ENCODE measurements at regions of chr3 and their contacts with region 1.

Region 1: DNA sequence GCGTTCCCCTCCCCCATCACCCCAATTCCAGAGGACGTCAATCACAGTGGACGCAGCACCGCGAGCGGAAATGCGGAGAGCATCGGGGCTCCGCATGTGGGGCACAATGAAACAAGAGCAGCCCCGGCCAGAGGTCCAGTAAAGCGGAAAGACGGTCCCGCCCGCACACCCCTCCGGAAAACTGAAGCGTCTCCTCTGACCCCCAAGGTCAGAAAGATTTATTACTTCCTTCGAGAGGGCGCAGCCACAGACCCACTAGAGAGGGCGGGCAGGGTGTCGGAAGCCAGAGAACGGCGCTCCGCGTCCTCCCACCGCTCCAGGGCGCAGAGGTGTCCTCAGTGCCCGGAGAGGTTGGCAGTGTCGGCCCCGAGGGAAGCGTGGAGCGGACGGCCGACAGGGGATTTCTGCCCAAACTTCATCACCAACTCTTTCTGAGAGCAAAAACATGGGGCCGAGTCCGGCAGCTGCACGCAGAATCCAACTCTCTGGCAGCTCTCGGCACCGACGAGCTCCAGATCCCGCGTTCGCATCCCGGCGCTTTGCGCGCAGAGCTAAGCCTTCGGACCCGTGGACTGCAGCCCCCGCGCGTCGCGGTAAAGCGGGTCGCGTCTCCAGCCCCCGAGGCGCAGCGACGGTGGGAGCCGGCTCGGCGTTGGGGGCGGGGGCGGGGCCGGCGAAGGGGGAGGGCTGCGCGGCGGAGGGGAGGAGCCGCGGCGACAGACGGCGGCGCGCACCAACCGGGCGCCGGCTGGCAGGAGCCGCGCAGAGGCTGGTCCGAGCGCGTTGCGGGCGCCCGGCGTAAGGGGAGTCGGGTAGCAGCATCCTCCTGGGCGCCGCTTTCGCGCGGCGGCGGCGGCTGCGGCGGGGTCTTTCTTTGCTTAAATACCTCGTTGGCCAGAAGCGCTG is at the start of gene CHST2:
- DNase-seq: peak; percentile 76
- ATAC-seq: peak; percentile 84
- H3K4me3 Mint-ChIP-seq: peak within 1 kb of the TSS; percentile 87
- H3K27ac Mint-ChIP-seq: peak within 1 kb of the TSS; percentile 68
- H3K4me1 Mint-ChIP-seq: peaks cover 29% of the 10 kb centered on the region
- H3K27me3 Mint-ChIP-seq: peaks cover 5% of the 10 kb centered on the region
- CTCF ChIP-seq: no peak
- total RNA-seq, gene CHST2: 6.0 to 6.9 TPM

Region 2: DNA sequence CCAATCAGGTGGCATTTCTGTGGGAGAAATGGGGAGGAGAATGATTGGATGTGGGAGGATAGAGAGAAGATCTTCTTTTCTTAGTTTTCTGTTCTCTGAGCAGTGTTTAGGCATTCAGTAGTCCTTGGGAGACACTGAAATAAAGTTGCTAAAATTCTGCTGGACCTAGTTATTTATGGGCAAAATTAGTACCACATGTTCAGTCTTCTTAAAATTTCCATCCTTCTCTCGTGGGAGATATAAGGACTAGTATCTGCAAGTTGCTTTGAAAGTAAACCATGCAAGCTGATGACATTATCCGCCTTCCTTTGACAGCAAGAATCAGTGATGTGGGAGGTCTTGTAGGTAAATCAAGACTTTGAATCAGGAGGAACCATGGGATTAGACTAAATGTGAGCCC is 19.6 kb before region 1 on chr3:
- CTCF ChIA-PET with region 1: no interaction called
- POLR2A ChIA-PET with region 1: no interaction called
- intact Hi-C with region 1: no loop called
- DNase-seq: no peak
- ATAC-seq: no peak
- H3K4me3 Mint-ChIP-seq: no peak overlapping the region
- H3K27ac Mint-ChIP-seq: no peak overlapping the region
- H3K4me1 Mint-ChIP-seq: peaks cover 3% of the 10 kb centered on the region
- H3K27me3 Mint-ChIP-seq: peaks cover 4% of the 10 kb centered on the region
- CTCF ChIP-seq: no peak

Region 3: GRCh38 chr3:143146486-143147274 is 27.4 kb after region 1 on chr3:
- CTCF ChIA-PET with region 1: no interaction called
- POLR2A ChIA-PET with region 1: no interaction called
- intact Hi-C with region 1: no loop called
- DNase-seq: no peak
- ATAC-seq: no peak
- H3K4me3 Mint-ChIP-seq: no peak overlapping the region
- H3K27ac Mint-ChIP-seq: no peak overlapping the region
- H3K4me1 Mint-ChIP-seq: peaks cover 2% of the 10 kb centered on the region
- H3K27me3 Mint-ChIP-seq: no peaks in the 10 kb centered on the region
- CTCF ChIP-seq: no peak

Region 4: DNA sequence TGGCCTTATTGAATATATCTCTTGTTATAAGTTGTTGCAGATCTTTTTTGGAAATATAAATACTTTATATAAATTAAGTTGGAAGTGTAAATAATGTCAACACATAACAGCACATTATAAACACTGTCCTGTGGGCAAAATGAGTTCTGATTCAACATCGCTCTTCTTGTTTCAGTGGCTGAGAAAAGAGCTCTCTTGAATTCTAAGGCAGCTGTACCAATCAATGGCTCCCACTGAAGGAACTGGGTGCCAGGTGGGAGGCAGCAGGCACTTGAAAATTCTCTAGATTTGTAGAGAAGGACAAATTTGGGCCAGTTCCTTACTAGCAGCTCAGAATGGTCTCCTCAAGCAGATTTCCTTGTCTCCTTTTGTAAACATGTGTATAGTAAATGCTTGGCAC is 45.9 kb after region 1 on chr3:
- CTCF ChIA-PET with region 1: interaction called, 13 read pairs
- POLR2A ChIA-PET with region 1: interaction called, 5 read pairs
- intact Hi-C with region 1: loop called (anchors 5 kb)
- DNase-seq: no peak
- ATAC-seq: peak; percentile 30
- H3K4me3 Mint-ChIP-seq: peak overlapping the region; percentile 37
- H3K27ac Mint-ChIP-seq: peak overlapping the region; percentile 94
- H3K4me1 Mint-ChIP-seq: peaks cover 71% of the 10 kb centered on the region
- H3K27me3 Mint-ChIP-seq: no peaks in the 10 kb centered on the region
- CTCF ChIP-seq: no peak

Region 5: GRCh38 chr3:143236226-143236964 is 117.1 kb after region 1 on chr3:
- CTCF ChIA-PET with region 1: no interaction called
- POLR2A ChIA-PET with region 1: no interaction called
- intact Hi-C with region 1: no loop called
- DNase-seq: no peak
- ATAC-seq: no peak
- H3K4me3 Mint-ChIP-seq: no peak overlapping the region
- H3K27ac Mint-ChIP-seq: no peak overlapping the region
- H3K4me1 Mint-ChIP-seq: peaks cover 8% of the 10 kb centered on the region
- H3K27me3 Mint-ChIP-seq: no peaks in the 10 kb centered on the region
- CTCF ChIP-seq: no peak

Region 6: DNA sequence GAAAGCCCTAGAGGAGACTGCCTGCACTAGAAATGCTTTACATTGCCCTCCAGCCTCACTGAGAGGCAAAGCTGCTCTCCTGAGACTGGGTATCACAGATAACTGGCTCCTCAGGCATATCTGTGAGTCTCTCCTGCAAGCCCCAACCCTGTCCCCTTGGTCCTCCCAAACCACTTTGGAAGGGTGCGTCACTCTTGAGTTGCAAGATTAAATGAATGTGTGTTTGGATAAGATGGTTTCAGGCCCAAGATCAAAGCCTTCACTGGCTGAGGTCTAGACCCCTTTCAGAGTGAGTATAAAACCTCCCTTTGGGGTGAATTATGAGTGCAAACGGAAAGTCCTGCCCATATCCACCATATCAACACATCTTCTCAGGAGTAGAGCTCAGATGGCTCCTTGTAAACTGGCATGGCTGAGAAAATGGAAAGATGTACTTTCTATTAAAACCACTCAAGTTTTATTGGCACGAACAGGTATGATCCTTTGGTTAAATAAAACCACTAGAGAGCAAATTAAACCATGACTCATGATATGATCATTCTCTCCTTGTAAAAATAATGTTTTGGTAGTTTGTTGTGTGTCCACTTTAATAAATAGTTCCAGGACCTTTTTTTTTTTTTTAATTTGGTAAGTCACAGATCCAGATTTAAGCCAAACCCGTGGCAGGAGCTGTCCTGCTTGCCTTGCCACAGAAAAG is 164.3 kb after region 1 on chr3:
- CTCF ChIA-PET with region 1: interaction called, 8 read pairs
- POLR2A ChIA-PET with region 1: no interaction called
- intact Hi-C with region 1: loop called (anchors 10 kb)
- DNase-seq: peak; percentile 34
- ATAC-seq: peak; percentile 69
- H3K4me3 Mint-ChIP-seq: no peak overlapping the region
- H3K27ac Mint-ChIP-seq: peak overlapping the region; percentile 7
- H3K4me1 Mint-ChIP-seq: peaks cover 43% of the 10 kb centered on the region
- H3K27me3 Mint-ChIP-seq: no peaks in the 10 kb centered on the region
- CTCF ChIP-seq: no peak

Region 7: GRCh38 chr3:143443851-143444331 is 324.6 kb after region 1 on chr3:
- CTCF ChIA-PET with region 1: interaction called, 7 read pairs
- POLR2A ChIA-PET with region 1: no interaction called
- intact Hi-C with region 1: loop called (anchors 10 kb)
- DNase-seq: peak; percentile 59
- ATAC-seq: peak; percentile 57
- H3K4me3 Mint-ChIP-seq: no peak overlapping the region
- H3K27ac Mint-ChIP-seq: no peak overlapping the region
- H3K4me1 Mint-ChIP-seq: peaks cover 31% of the 10 kb centered on the region
- H3K27me3 Mint-ChIP-seq: no peaks in the 10 kb centered on the region
- CTCF ChIP-seq: no peak

Region 8: DNA sequence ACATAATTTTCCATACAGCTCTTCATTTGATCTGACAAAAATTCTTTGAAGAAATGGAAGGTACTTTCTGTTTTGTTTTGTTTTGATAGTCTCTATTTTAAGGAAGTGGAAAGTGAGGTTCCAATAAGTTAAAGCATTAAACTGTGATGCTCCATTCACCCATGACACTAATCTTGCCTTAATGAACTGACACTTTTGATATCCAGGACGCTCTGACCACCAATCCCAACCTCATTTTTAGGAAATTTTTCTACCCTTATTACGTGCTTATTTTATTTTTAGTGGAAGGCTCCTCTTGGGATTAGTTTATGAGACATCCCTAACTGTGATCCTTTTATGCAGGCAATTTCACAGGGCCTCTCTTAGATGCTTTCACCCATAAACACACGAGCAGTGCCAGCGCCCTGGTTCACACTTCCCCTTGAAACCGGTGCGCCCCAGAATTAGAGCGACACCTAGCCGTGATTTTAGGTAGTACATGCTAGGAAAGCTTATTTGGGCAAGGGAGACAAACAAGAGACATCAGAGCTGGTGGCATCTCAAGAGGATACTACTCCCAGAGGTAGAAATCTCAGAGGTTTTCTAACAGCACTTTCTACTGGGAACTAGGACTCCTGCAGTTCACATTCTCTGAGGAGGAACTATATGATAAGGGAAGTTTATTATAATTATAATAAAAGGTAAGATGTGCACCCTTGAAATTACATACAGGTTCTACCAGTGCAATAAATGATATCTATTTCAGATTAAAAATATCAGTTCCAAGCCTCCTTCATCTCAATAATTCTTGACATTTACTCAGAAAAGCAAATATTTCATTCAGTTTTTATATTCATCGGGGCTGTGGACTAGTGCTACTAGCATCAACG is 555.1 kb after region 1 on chr3:
- CTCF ChIA-PET with region 1: interaction called, 23 read pairs
- POLR2A ChIA-PET with region 1: no interaction called
- intact Hi-C with region 1: loop called (anchors 2 kb)
- DNase-seq: peak; percentile 84
- ATAC-seq: peak; percentile 98
- H3K4me3 Mint-ChIP-seq: peak overlapping the region; percentile 65
- H3K27ac Mint-ChIP-seq: peak overlapping the region; percentile 81
- H3K4me1 Mint-ChIP-seq: peaks cover 17% of the 10 kb centered on the region
- H3K27me3 Mint-ChIP-seq: no peaks in the 10 kb centered on the region
- CTCF ChIP-seq: peak; percentile 90